ENCODE measurements at regions of chr13 and their contacts with region 1.

Region 1: DNA sequence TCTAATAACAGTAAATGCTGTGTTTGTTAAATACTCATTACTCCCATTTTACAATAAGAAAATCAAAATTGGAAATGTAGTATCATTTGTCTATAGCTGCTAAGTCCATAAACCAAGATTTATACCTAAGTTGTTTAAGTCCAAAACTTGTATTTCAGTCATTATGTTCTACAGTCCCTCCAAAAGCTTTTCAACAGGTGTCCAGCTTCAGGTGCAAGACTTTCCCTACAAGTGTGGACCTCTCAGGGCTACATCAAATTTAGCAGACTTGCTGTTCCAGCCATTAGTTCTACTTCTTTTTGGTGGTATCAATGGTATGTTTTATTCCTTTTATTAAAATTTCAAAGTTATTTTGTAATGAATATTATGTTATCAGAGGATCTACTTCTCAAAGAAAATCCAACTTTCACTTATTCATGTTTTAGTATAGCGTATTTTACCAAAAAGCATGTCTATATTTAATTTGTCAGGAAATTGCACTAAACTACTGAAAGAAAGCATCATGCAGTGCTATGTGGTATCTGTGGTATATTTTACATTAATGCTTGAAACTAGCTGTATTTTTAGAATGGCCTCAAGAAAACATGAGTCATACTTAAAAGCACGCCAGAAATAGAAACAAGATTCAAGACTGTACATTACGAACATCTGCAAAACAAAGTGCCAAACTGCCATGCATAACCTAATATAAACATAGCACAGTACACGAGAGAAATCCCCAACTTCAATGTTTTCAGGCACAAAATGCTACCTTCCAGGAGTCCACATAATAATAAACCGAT is 44.5 kb downstream of the VWA8 start:
- DNase-seq: no peak
- ATAC-seq: peak; percentile 66
- H3K4me3 Mint-ChIP-seq: peak overlapping the region; percentile 57
- H3K27ac Mint-ChIP-seq: peak overlapping the region; percentile 97
- H3K4me1 Mint-ChIP-seq: peaks cover 67% of the 10 kb centered on the region
- H3K27me3 Mint-ChIP-seq: no peaks in the 10 kb centered on the region

Region 2: GRCh38 chr13:41465241-41465847 is 451.0 kb before region 1 on chr13:
- CTCF ChIA-PET with region 1: no interaction called
- POLR2A ChIA-PET with region 1: no interaction called
- intact Hi-C with region 1: loop called in 1 of 2 experiments (anchors 2 kb)
- DNase-seq: peak; percentile 95
- ATAC-seq: peak; percentile 84
- H3K4me3 Mint-ChIP-seq: peak overlapping the region; percentile 82
- H3K27ac Mint-ChIP-seq: peak overlapping the region; percentile 98
- H3K4me1 Mint-ChIP-seq: peaks cover 91% of the 10 kb centered on the region
- H3K27me3 Mint-ChIP-seq: no peaks in the 10 kb centered on the region

Region 3: DNA sequence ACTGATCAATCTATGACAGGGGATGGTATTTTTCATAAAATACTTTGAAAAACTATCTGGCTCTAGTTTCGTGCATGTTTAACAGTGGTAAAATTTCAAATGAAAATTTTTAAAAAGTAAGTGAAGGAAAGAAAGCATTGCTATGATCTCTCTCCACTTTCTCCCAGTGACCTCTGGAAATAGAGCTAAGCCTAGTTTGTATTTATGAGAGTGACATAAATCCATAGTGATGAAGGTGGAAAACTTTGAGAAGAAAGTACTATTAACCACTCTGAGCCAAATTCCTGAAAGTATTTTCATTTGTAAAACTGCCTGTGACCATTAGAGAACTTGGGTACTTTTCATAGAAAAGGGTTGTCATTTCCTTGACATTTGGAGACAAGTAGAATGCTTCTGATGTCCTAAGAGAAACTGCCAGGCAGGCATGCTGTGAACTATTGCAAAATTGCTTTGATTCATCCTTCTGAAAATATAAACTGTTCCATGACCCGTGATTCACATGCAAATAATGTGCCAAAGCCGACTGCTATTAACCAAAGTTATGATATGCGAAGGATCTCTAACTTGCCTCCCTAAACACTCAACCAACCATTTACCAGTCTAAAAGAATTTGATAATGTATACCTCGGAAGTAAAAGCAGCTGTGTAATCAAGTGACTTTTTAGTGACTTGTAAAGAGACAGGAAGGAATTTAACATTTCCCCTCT is 88.7 kb before region 1 on chr13:
- CTCF ChIA-PET with region 1: no interaction called
- POLR2A ChIA-PET with region 1: no interaction called
- intact Hi-C with region 1: no loop called
- DNase-seq: no peak
- ATAC-seq: no peak
- H3K4me3 Mint-ChIP-seq: no peak overlapping the region
- H3K27ac Mint-ChIP-seq: no peak overlapping the region
- H3K4me1 Mint-ChIP-seq: no peaks in the 10 kb centered on the region
- H3K27me3 Mint-ChIP-seq: no peaks in the 10 kb centered on the region

Region 4: DNA sequence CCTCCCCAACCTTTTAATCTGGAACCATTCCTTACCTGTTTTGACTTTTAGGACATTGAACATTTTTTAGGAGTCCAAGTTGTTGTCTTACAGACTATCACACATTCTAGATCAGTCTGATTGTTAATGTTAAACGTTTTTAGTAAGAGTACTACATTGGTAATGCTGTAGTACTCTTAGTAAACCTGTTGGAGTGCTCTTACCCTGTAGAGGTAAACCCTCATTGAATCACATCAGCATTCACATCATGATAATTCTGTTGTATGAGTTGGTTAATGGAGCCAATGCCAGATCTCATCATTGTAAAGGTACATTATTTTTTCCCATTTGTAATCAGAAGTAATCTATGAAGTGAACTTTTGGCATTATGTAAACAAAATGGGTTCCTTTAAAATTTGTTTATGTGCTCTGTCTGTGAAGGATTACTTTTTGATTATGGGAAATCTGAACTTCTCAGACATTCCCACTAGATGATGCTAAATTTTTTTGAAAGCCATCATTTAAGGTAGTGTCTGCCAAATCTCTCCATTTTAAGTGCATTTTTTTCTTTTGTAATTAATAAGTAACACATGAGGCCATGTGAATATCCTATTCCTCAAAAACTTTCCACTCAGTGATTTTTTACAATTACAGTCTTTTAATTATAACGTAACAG is 10.6 kb before region 1 on chr13:
- CTCF ChIA-PET with region 1: interaction called, 14 read pairs
- POLR2A ChIA-PET with region 1: interaction called, 6 read pairs
- intact Hi-C with region 1: loop called (anchors 1 kb)
- DNase-seq: no peak
- ATAC-seq: peak; percentile 78
- H3K4me3 Mint-ChIP-seq: no peak overlapping the region
- H3K27ac Mint-ChIP-seq: peak overlapping the region; percentile 3
- H3K4me1 Mint-ChIP-seq: peaks cover 35% of the 10 kb centered on the region
- H3K27me3 Mint-ChIP-seq: no peaks in the 10 kb centered on the region

Region 5: DNA sequence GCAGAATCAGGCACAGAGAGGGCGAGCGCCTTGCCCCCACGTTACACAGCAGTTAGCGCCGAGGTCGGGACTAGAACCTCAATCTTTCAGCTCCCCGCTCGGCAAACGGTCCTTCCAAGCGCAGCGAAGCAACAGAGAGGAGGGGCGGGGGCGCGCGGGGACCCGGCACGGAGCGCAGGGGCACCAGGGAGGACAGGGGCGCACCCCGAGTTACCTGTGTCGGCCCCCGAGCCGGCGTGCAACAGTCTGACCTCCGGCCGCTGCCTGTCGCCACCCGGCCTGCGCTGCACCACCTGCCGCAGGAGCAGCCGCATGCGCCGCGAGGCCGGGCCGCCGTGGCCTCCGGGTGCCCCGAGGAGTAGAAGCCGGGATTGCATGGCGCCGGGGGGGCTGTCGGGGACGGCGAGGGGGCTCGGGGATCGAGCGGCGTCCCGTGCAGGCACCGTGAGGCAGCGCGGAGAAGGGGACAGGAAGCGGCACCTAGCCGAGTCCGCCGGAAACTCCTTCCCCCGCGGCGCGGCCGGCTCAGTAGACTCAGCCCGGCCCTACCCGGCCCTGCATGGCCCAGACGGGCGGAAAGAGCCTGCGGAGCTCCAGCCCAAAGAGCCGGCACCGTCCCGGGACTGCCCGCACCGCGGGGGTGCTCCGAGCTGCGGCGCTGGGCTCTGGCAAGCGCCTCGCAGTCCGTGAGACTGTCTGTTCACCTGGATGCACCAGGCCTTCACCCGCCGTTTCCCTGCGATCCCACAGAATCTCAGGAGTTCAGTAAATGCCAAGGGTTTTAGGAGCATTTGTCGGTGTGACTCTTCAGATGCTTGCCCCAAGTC is 44.5 kb after region 1 on chr13 and contains the start of gene VWA8:
- CTCF ChIA-PET with region 1: interaction called, 7 read pairs
- POLR2A ChIA-PET with region 1: interaction called, 16 read pairs
- intact Hi-C with region 1: loop called (anchors 1 kb)
- DNase-seq: peak; percentile 93
- ATAC-seq: peak; percentile 81
- H3K4me3 Mint-ChIP-seq: peak within 1 kb of the TSS; percentile 92
- H3K27ac Mint-ChIP-seq: peak within 1 kb of the TSS; percentile 99
- H3K4me1 Mint-ChIP-seq: peaks cover 60% of the 10 kb centered on the region
- H3K27me3 Mint-ChIP-seq: peaks cover 2% of the 10 kb centered on the region
- total RNA-seq, gene VWA8: 21.7 to 26.2 TPM

Region 6: DNA sequence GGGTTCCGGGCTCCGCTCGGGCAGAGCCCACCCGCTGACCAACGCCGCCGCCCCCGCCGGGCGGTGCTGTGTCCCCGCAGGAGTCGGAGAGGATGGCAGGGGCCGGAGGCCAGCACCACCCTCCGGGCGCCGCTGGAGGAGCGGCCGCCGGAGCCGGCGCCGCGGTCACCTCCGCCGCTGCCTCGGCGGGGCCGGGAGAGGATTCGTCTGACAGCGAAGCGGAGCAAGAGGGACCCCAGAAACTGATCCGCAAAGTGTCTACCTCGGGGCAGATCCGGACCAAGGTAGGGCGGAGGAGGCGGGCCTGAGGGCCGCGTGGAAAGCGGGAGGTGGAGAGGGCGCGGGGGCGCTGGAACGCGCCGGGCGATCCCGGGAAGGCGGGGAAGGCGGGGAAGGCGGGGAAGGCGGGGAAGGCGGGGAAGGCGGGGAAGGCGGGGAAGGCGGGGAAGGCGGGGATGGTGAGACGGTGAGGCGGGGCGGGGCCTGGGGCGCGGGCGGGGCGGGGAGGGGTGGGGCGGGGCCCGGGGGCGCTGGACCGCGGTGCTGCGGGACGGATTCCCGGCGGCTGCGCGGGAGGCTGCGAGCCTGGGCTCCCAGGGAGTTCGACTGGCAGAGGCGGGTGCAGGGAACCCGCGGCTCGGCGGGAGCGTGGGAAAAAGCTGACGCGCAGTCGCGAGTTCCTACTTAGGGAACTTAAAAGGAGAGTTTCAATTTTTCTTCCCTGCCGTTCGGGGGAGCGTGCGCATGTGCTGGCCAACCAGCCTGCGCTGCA is 132.5 kb after region 1 on chr13:
- CTCF ChIA-PET with region 1: interaction called, 7 read pairs
- POLR2A ChIA-PET with region 1: interaction called, 7 read pairs
- intact Hi-C with region 1: loop called in 1 of 2 experiments (anchors 2 kb)
- DNase-seq: peak; percentile 82
- ATAC-seq: peak; percentile 68
- H3K4me3 Mint-ChIP-seq: peak overlapping the region; percentile 86
- H3K27ac Mint-ChIP-seq: no peak overlapping the region
- H3K4me1 Mint-ChIP-seq: peaks cover 24% of the 10 kb centered on the region
- H3K27me3 Mint-ChIP-seq: no peaks in the 10 kb centered on the region

Region 7: GRCh38 chr13:42392716-42393572 is 476.6 kb after region 1 on chr13:
- CTCF ChIA-PET with region 1: no interaction called
- POLR2A ChIA-PET with region 1: interaction called, 3 read pairs
- intact Hi-C with region 1: loop called in 1 of 2 experiments (anchors 1 kb)
- DNase-seq: peak; percentile 46
- ATAC-seq: peak; percentile 57
- H3K4me3 Mint-ChIP-seq: peak overlapping the region; percentile 80
- H3K27ac Mint-ChIP-seq: peak overlapping the region; percentile 100
- H3K4me1 Mint-ChIP-seq: peaks cover 80% of the 10 kb centered on the region
- H3K27me3 Mint-ChIP-seq: no peaks in the 10 kb centered on the region